Naive thymus-derived CD4-positive, alpha-beta T cell (primary cell): ENCODE measurements at regions of chr2 and their contacts with region 1.

Region 1: GRCh38 chr2:162318328-162319180 is at the start of gene IFIH1:
- DNase-seq: peak; percentile 60 to 86 (median 73)
- ATAC-seq: peak; percentile 93
- H3K4me3 ChIP-seq: peak within 1 kb of the TSS; percentile 93
- H3K4me3 Mint-ChIP-seq: peak within 1 kb of the TSS; percentile 89 to 100 (median 95)
- H3K27ac ChIP-seq: peak within 1 kb of the TSS; percentile 85
- H3K27ac Mint-ChIP-seq: peak within 1 kb of the TSS; percentile 97 to 100 (median 99)
- H3K4me1 ChIP-seq: peaks cover 22 to 40% of the 10 kb centered on the region in 2 donors
- H3K4me1 Mint-ChIP-seq: peaks cover 43 to 69% (median 62%) of the 10 kb centered on the region in 7 donors
- H3K27me3 ChIP-seq: no peaks in the 10 kb centered on the region
- H3K27me3 Mint-ChIP-seq: no peaks in the 10 kb centered on the region
- total RNA-seq, gene IFIH1: 20.6 to 77.9 (median 30.7) TPM

Region 2: DNA sequence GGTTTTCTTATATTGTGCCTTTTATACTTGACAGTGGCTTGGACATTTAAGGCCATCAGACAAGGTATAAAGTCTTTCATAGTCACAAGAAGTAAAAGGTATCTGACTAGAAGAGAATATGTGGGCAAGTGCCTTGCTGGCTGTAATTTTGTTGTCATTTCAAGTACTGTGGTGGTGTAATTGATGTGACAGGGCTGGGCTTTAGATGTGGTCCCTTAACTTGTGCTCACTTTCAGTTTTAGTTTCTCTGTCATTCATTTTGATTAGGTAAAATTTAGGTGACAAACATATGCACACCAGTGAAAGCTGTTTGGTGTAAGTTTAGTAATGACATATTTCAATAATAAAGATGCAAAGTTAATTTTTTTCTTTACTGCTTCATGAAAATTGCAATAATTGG is 933.7 kb before region 1 on chr2:
- CTCF ChIA-PET with region 1: no interaction called
- POLR2A ChIA-PET with region 1: no interaction called
- intact Hi-C with region 1: loop called in 1 of 2 experiments (anchors 5 kb)
- DNase-seq: peak in 6 of 9 donors; percentile 8 to 49 (median 36)
- ATAC-seq: peak; percentile 78
- H3K4me3 ChIP-seq: no peak overlapping the region
- H3K4me3 Mint-ChIP-seq: peak overlapping the region in 2 of 10 donors; percentile 30 to 49
- H3K27ac ChIP-seq: no peak overlapping the region
- H3K27ac Mint-ChIP-seq: peak overlapping the region in 3 of 9 donors; percentile 30 to 41 (median 37)
- H3K4me1 ChIP-seq: peaks cover 8% of the 10 kb centered on the region in 2 donors
- H3K4me1 Mint-ChIP-seq: peaks cover 0 to 30% (median 13%) of the 10 kb centered on the region in 7 donors
- H3K27me3 ChIP-seq: no peaks in the 10 kb centered on the region
- H3K27me3 Mint-ChIP-seq: no peaks in the 10 kb centered on the region

Region 3: DNA sequence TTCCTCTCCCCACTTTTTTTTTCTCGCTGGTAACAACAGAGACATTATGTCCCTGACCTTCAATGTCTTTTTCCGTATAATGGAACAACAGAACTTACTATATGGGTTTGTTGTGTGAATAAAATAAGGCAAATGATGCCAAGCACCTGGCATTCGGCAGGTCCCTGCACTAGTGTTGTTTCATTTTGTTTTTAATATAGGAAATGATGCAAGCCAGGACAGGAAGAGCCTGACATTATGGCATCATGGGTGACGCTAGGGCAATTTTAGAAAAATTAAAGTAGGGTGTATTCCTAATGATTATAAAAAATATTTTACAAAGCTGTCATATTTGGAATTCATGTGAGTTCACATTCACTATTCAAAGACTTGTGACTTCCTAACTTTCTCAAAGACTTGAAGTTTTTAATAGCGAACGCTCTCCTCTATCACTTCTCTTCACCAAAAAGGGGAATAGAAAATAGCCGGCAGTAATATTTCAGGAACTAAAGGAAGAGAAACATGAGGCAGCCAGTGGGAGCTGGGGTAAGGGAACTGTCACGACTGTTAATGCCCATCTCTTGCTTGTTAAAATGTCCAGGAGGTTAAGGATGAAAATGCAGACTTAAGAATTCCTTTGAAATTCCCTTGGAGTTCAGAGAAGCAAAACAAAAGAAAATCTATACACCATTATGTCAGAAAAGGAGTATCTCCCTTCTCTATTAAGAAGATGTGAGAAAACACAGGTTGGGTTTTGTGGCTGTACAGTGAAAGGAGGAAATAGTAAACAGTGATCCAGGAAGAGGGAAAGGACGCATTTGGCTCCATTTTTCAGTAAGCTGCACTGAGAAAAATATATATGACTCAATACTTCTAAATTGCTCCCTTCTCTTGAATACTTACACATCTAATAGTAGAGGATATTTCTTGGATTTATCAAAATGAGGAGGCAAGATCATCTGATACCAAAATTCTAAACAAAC is 304.8 kb before region 1 on chr2:
- CTCF ChIA-PET with region 1: no interaction called
- POLR2A ChIA-PET with region 1: interaction called, 3 read pairs
- intact Hi-C with region 1: loop called in 1 of 2 experiments (anchors 5 kb)
- DNase-seq: peak in 7 of 9 donors; percentile 30 to 71 (median 55)
- ATAC-seq: peak; percentile 36
- H3K4me3 ChIP-seq: peak overlapping the region; percentile 11
- H3K4me3 Mint-ChIP-seq: peak overlapping the region; percentile 52 to 86 (median 70)
- H3K27ac ChIP-seq: peak overlapping the region; percentile 95
- H3K27ac Mint-ChIP-seq: peak overlapping the region; percentile 94 to 99 (median 98)
- H3K4me1 ChIP-seq: peaks cover 47 to 72% of the 10 kb centered on the region in 2 donors
- H3K4me1 Mint-ChIP-seq: peaks cover 41 to 86% (median 81%) of the 10 kb centered on the region in 7 donors
- H3K27me3 ChIP-seq: no peaks in the 10 kb centered on the region
- H3K27me3 Mint-ChIP-seq: no peaks in the 10 kb centered on the region

Region 4: DNA sequence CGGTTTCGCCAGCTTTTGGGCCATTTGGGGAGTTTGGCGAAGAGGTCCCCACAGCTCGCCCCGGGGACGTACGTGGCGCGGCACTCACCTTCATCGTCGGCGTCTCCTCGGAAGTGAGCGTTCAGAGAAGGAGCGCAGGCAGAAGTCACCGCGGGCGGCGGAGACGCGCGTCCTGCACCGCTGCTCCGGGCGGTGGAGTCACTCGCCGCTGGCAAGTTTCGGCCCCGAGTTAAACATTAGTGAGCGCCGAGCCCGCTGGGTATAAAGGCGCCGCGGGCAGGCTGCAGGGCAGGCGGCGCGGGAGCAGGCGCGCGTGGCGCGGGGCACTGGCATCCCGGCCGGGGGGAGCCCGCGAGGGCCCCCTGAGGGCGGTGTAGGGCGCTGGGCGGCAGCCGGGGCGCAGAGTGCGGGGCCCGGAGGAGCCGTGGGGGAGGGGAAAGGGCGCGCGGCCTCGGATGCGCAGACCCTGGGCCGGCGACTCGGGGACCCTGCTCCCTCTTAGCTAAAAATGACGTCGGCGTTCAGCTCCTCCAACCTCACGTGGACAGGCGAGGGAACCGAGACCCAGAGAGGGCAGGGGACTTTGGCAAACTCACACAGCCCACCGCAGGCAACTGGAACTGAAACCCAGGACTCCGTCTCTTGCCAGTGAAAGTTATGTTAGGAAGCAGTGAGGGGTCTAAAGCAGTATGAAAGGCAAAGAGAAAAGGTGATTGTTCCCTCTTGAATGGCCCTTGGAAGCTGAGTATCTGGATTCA is 244.5 kb before region 1 on chr2 and contains the start of gene DPP4:
- CTCF ChIA-PET with region 1: no interaction called
- POLR2A ChIA-PET with region 1: no interaction called
- intact Hi-C with region 1: loop called (anchors 5 kb)
- DNase-seq: peak; percentile 31 to 68 (median 61)
- ATAC-seq: peak; percentile 88
- H3K4me3 ChIP-seq: peak within 1 kb of the TSS; percentile 95
- H3K4me3 Mint-ChIP-seq: peak within 1 kb of the TSS; percentile 92 to 100 (median 98)
- H3K27ac ChIP-seq: peak within 1 kb of the TSS; percentile 84
- H3K27ac Mint-ChIP-seq: peak within 1 kb of the TSS; percentile 86 to 98 (median 94)
- H3K4me1 ChIP-seq: peaks cover 0 to 28% of the 10 kb centered on the region in 2 donors
- H3K4me1 Mint-ChIP-seq: peaks cover 30 to 60% (median 52%) of the 10 kb centered on the region in 7 donors
- H3K27me3 ChIP-seq: no peaks in the 10 kb centered on the region
- H3K27me3 Mint-ChIP-seq: peaks cover 0 to 5% (median 0%) of the 10 kb centered on the region in 5 donors
- total RNA-seq, gene DPP4: 35.7 to 188 (median 41.6) TPM

Region 5: DNA sequence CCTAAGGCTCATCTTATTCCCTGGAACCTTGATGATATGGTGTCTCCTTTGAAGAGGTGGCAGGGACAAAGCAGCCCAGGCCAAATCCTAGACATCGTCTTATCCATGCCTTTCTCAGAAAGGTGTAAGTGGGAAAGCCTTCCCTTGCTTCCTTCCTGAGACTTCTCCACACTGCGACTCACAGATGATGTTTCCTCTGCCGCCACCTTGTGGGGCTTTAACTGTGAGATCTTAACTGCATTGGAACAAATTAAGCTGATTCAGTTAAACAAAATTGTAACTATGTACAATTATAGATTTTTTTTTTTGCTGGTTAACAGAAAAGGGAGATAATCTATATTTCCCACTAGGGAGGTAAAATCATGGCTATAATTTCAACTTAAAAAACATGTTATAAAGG is 15.4 kb after region 1 on chr2:
- CTCF ChIA-PET with region 1: interaction called, 6 read pairs
- POLR2A ChIA-PET with region 1: interaction called, 5 read pairs
- intact Hi-C with region 1: loop called (anchors 1 to 2 kb)
- DNase-seq: no peak
- ATAC-seq: peak; percentile 68
- H3K4me3 ChIP-seq: no peak overlapping the region
- H3K4me3 Mint-ChIP-seq: no peak overlapping the region
- H3K27ac ChIP-seq: no peak overlapping the region
- H3K27ac Mint-ChIP-seq: no peak overlapping the region
- H3K4me1 ChIP-seq: no peaks in the 10 kb centered on the region
- H3K4me1 Mint-ChIP-seq: peaks cover 0 to 3% (median 0%) of the 10 kb centered on the region in 7 donors
- H3K27me3 ChIP-seq: no peaks in the 10 kb centered on the region
- H3K27me3 Mint-ChIP-seq: no peaks in the 10 kb centered on the region